B cell (primary cell): ENCODE measurements at regions of chr1 and their contacts with region 1.

Region 1: GRCh38 chr1:92994105-92994712 is 32.9 kb upstream of the DIPK1A start:
- DNase-seq: peak; percentile 89
- ATAC-seq: peak; percentile 96
- H3K4me3 ChIP-seq: no peak overlapping the region
- H3K4me3 Mint-ChIP-seq: no peak overlapping the region
- H3K27ac ChIP-seq: no peak overlapping the region
- H3K27ac Mint-ChIP-seq: peak overlapping the region; percentile 76
- H3K4me1 ChIP-seq: peaks cover 35 to 41% of the 10 kb centered on the region in 2 donors
- H3K4me1 Mint-ChIP-seq: peaks cover 40% of the 10 kb centered on the region
- H3K27me3 ChIP-seq: no peaks in the 10 kb centered on the region
- H3K27me3 Mint-ChIP-seq: no peaks in the 10 kb centered on the region
- CTCF ChIP-seq: peak; percentile 87

Region 2: GRCh38 chr1:92872719-92873118 is 121.5 kb before region 1 on chr1:
- CTCF ChIA-PET with region 1: interaction called, 25 read pairs
- POLR2A ChIA-PET with region 1: no interaction called
- intact Hi-C with region 1: no loop called
- DNase-seq: no peak
- ATAC-seq: no peak
- H3K4me3 ChIP-seq: no peak overlapping the region
- H3K4me3 Mint-ChIP-seq: no peak overlapping the region
- H3K27ac ChIP-seq: no peak overlapping the region
- H3K27ac Mint-ChIP-seq: no peak overlapping the region
- H3K4me1 ChIP-seq: peaks cover 4 to 9% of the 10 kb centered on the region in 2 donors
- H3K4me1 Mint-ChIP-seq: peaks cover 14% of the 10 kb centered on the region
- H3K27me3 ChIP-seq: no peaks in the 10 kb centered on the region
- H3K27me3 Mint-ChIP-seq: no peaks in the 10 kb centered on the region
- CTCF ChIP-seq: no peak

Region 3: GRCh38 chr1:92910081-92910480 is 84.1 kb before region 1 on chr1:
- CTCF ChIA-PET with region 1: interaction called, 10 read pairs
- POLR2A ChIA-PET with region 1: no interaction called
- intact Hi-C with region 1: no loop called
- DNase-seq: no peak
- ATAC-seq: no peak
- H3K4me3 ChIP-seq: no peak overlapping the region
- H3K4me3 Mint-ChIP-seq: no peak overlapping the region
- H3K27ac ChIP-seq: no peak overlapping the region
- H3K27ac Mint-ChIP-seq: no peak overlapping the region
- H3K4me1 ChIP-seq: peaks cover 10 to 16% of the 10 kb centered on the region in 2 donors
- H3K4me1 Mint-ChIP-seq: peaks cover 50% of the 10 kb centered on the region
- H3K27me3 ChIP-seq: no peaks in the 10 kb centered on the region
- H3K27me3 Mint-ChIP-seq: no peaks in the 10 kb centered on the region
- CTCF ChIP-seq: no peak

Region 4: GRCh38 chr1:92951141-92951582 is 43.0 kb before region 1 on chr1:
- CTCF ChIA-PET with region 1: interaction called, 295 read pairs
- POLR2A ChIA-PET with region 1: interaction called, 5 read pairs
- intact Hi-C with region 1: loop called (anchors 5 kb)
- DNase-seq: peak; percentile 83
- ATAC-seq: peak; percentile 80
- H3K4me3 ChIP-seq: peak overlapping the region in 3 of 5 experiments; percentile 8 to 32 (median 8)
- H3K4me3 Mint-ChIP-seq: no peak overlapping the region
- H3K27ac ChIP-seq: peak overlapping the region; percentile 71 to 73
- H3K27ac Mint-ChIP-seq: no peak overlapping the region
- H3K4me1 ChIP-seq: peaks cover 79 to 86% of the 10 kb centered on the region in 2 donors
- H3K4me1 Mint-ChIP-seq: peaks cover 52% of the 10 kb centered on the region
- H3K27me3 ChIP-seq: no peaks in the 10 kb centered on the region
- H3K27me3 Mint-ChIP-seq: no peaks in the 10 kb centered on the region
- CTCF ChIP-seq: no peak

Region 5: DNA sequence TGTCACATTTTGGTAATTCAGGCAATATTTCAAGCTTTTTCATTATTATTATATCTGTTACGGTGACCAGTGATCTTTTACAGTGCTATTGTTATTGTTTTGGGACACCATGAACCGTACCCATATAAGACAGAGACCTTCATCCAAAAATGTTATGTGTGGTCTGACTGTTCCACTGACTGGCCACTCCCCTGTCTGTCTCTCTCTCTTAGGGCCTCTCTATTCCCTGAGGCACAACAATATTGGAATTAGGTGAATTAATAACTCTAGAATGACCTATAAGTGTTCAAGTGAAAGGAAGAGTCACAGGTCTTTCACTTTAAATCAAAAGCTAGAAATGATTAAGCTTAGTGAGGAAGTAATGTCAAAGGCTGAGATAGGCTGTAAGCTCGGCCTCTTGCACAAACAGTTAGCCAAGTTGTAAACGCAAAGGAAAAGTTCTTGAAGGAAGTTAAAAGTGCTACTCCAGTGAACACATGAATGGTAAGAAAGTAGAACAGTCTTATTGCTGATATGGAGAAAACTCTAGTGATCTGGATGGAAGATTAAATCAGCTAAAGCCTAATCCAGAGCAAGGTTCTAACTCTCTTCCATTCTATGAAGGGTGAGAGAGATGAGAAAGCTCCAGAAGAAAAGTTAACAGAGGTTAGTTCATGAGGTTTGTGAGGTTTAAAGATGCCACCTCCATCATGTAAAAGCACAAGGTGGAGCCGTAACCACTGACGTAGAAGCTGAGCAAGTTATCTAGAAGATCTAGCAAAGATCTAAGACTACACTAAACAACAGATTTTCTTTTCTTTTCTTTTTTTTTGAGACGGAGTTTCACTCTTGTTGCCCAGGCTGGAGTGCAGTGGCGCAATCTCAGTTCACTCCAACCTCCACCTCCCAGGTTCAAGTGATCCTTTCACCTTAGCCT is 13.2 kb before region 1 on chr1:
- CTCF ChIA-PET with region 1: interaction called, 405 read pairs
- POLR2A ChIA-PET with region 1: interaction called, 6 read pairs
- intact Hi-C with region 1: loop called (anchors 1 kb)
- DNase-seq: peak; percentile 48
- ATAC-seq: peak; percentile 37
- H3K4me3 ChIP-seq: peak overlapping the region in 1 of 5 experiments; percentile 24
- H3K4me3 Mint-ChIP-seq: peak overlapping the region; percentile 69
- H3K27ac ChIP-seq: peak overlapping the region; percentile 47 to 80
- H3K27ac Mint-ChIP-seq: peak overlapping the region; percentile 98
- H3K4me1 ChIP-seq: peaks cover 54 to 55% of the 10 kb centered on the region in 2 donors
- H3K4me1 Mint-ChIP-seq: peaks cover 52% of the 10 kb centered on the region
- H3K27me3 ChIP-seq: no peaks in the 10 kb centered on the region
- H3K27me3 Mint-ChIP-seq: no peaks in the 10 kb centered on the region
- CTCF ChIP-seq: no peak